ENCODE measurements at regions of chr10 and their contacts with region 1.

Region 1: GRCh38 chr10:47207281-47207615 is 92.7 kb upstream of the GDF10 start:
- DNase-seq: peak; percentile 42
- ATAC-seq: peak; percentile 65
- H3K4me3 Mint-ChIP-seq: peak overlapping the region; percentile 51
- H3K27ac Mint-ChIP-seq: peak overlapping the region; percentile 95
- H3K4me1 Mint-ChIP-seq: peaks cover 60% of the 10 kb centered on the region
- H3K27me3 Mint-ChIP-seq: no peaks in the 10 kb centered on the region
- CTCF ChIP-seq: no peak

Region 2: GRCh38 chr10:47261121-47261520 is 53.9 kb after region 1 on chr10:
- CTCF ChIA-PET with region 1: interaction called, 5 read pairs
- POLR2A ChIA-PET with region 1: interaction called, 3 read pairs
- intact Hi-C with region 1: loop called (anchors 5 kb)
- DNase-seq: peak; percentile 55
- ATAC-seq: peak; percentile 57
- H3K4me3 Mint-ChIP-seq: peak overlapping the region; percentile 44
- H3K27ac Mint-ChIP-seq: peak overlapping the region; percentile 93
- H3K4me1 Mint-ChIP-seq: peaks cover 93% of the 10 kb centered on the region
- H3K27me3 Mint-ChIP-seq: no peaks in the 10 kb centered on the region
- CTCF ChIP-seq: no peak